ENCODE measurements at regions of chr9 and their contacts with region 1.

Region 1: GRCh38 chr9:81682797-81683196 is 6.5 kb downstream of the TLE1 start:
- DNase-seq: no peak
- ATAC-seq: no peak
- H3K4me3 ChIP-seq: peak overlapping the region in 4 of 5 experiments; percentile 2 to 21 (median 12)
- H3K4me3 Mint-ChIP-seq: no peak overlapping the region
- H3K27ac ChIP-seq: no peak overlapping the region
- H3K27ac Mint-ChIP-seq: peak overlapping the region; percentile 21
- H3K4me1 ChIP-seq: peaks cover 34 to 49% of the 10 kb centered on the region in 2 donors
- H3K4me1 Mint-ChIP-seq: peaks cover 18% of the 10 kb centered on the region
- H3K27me3 ChIP-seq: no peaks in the 10 kb centered on the region
- H3K27me3 Mint-ChIP-seq: no peaks in the 10 kb centered on the region
- CTCF ChIP-seq: no peak

Region 2: DNA sequence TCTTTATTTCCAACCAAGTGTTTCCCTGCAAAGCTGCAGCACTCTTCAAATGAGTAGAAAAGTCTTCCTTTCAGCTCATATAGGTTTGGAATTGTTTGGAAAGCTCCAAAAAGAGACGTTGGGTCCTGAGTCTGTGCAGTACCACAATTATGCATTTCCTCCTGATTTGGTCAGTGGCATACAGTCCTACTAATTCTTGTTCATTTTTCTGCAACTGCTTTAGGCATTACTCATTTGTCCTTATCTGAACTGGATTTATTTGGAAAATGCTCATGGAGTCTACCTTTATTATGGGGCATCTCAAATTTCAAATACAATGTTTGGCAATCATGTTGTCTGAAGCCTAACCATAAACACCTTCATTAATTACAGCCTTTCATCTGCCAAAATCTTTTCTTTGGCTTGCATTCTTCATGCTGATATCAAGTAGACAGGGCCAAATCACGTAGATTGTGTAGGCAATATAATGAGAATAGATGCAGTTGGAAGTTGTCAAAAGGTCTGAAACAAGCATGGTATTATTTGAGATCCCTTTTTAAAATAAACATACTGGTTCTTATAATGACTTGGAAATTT is 226.3 kb before region 1 on chr9:
- CTCF ChIA-PET with region 1: no interaction called
- POLR2A ChIA-PET with region 1: no interaction called
- intact Hi-C with region 1: loop called (anchors 5 kb)
- DNase-seq: no peak
- ATAC-seq: no peak
- H3K4me3 ChIP-seq: no peak overlapping the region
- H3K4me3 Mint-ChIP-seq: no peak overlapping the region
- H3K27ac ChIP-seq: no peak overlapping the region
- H3K27ac Mint-ChIP-seq: no peak overlapping the region
- H3K4me1 ChIP-seq: no peaks in the 10 kb centered on the region
- H3K4me1 Mint-ChIP-seq: no peaks in the 10 kb centered on the region
- H3K27me3 ChIP-seq: peaks cover 0 to 3% (median 0%) of the 10 kb centered on the region in 4 experiments
- H3K27me3 Mint-ChIP-seq: no peaks in the 10 kb centered on the region
- CTCF ChIP-seq: no peak

Region 3: GRCh38 chr9:81671880-81672280 is 10.9 kb before region 1 on chr9:
- CTCF ChIA-PET with region 1: interaction called, 36 read pairs
- POLR2A ChIA-PET with region 1: interaction called, 7 read pairs
- intact Hi-C with region 1: loop called (anchors 2 kb)
- DNase-seq: no peak
- ATAC-seq: no peak
- H3K4me3 ChIP-seq: no peak overlapping the region
- H3K4me3 Mint-ChIP-seq: no peak overlapping the region
- H3K27ac ChIP-seq: no peak overlapping the region
- H3K27ac Mint-ChIP-seq: no peak overlapping the region
- H3K4me1 ChIP-seq: peaks cover 23 to 24% of the 10 kb centered on the region in 2 donors
- H3K4me1 Mint-ChIP-seq: peaks cover 69% of the 10 kb centered on the region
- H3K27me3 ChIP-seq: no peaks in the 10 kb centered on the region
- H3K27me3 Mint-ChIP-seq: no peaks in the 10 kb centered on the region
- CTCF ChIP-seq: no peak